RWPE1 (cell line): ENCODE measurements at regions of chr9 and their contacts with region 1.

Region 1: DNA sequence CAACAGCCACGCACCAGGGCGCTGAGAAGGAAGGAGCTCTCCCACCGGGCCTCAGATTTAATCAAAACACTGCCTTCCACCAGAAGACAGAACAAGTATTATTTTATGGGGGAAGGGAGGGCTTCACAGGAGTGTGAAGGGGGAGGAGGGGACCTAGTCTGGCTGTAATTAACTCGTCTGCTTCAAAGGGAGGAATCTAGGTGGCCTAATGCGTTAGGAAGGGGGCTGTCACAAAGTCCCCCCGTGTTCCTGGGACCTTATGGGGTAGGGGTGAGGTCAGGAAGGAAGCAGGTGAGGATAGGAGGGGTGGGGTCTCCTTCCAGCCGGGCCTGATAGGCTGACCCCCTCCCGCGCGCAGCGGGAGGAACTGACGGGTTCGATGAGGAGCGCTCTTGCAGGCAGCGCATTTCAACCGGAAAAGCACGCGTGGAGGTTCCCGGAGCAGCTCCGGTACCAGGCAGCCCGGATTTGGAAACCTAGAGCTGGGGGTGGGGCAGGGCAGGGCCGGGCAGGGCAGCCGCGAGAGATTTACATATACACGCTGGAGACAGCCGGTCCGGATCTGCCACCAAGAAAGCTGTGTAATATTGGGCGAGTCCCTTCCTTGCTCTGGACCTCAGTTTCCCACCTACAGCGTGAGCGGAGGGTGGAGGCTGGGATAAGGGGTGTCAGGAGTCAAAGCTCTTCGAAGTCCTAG is 2.0 kb downstream of the SHB start:
- DNase-seq: no peak
- H3K27ac ChIP-seq: peak overlapping the region; percentile 89
- CTCF ChIP-seq: no peak; the same call in none of the 2 replicates

Region 2: GRCh38 chr9:37827473-37828165 is 239.4 kb before region 1 on chr9:
- CTCF ChIA-PET with region 1: no interaction called
- POLR2A ChIA-PET with region 1: no interaction called
- DNase-seq: no peak
- H3K27ac ChIP-seq: no peak overlapping the region
- CTCF ChIP-seq: no peak

Region 3: DNA sequence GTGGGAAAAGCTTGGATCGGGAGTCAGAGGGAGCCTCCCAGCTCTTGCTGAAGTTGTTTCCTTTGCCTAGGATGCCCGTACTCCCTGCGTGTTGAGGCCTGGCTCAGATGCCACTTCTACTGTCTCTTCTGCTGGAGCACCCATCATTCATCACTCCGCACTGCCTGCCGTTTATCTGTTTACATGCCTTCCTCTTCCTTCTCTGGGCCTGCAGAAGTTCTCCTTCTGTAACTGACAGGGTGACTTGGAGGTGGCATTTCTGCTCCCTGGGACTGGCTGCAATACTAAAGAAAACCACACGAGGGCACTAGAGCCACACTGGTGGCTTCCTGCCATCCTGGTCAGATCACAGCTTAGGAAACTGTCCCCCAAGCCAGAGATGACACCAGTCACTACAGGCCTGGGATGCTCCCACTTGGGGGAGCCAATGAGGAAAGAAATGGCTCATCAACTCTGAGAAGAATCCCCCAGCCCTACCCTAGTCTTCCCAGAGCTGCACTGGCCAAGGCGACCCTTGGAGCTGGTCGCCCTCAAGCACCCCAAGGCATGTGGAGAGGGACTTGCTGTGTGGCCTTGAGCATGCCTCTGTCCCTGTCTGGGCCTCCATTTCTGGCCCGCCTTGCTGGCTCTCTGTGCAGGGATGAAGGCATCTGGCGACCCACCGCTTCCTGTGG is 153.4 kb before region 1 on chr9:
- CTCF ChIA-PET with region 1: interaction called, 11 read pairs
- POLR2A ChIA-PET with region 1: no interaction called
- DNase-seq: peak; percentile 74
- H3K27ac ChIP-seq: peak overlapping the region; percentile 84
- CTCF ChIP-seq: peak; percentile 96

Region 4: DNA sequence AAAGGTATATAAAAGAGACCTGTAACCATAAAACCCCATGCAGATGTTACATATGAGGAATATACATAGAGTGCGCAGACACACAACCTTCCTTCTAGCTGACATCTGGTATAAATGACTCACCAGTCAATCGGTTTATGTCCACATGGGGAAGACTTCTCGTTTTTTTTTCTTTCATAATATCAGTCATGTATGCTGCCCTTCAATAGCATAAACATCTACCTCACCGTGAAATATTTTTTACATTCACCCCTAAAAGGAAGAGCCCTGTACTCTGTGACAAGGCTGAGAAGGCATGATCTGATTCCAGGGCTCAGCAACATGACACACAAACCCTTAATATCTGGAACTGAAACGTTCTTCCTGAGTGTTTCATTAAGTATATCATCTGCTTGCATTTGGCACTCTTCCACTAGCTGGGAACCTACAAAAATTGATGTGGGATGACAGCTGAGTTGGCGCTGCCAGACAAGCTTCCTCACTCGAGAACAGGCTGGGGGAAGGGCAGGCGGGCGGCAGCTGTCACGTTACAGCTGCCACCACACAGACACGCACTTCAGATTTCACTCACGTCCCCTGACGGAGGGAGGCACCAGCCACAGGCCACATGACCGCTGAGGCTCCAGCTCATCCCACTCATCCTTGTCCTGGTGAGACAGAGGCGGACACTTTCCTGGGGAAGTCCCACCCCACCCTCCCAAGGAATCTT is 72.3 kb before region 1 on chr9:
- CTCF ChIA-PET with region 1: no interaction called
- POLR2A ChIA-PET with region 1: no interaction called
- DNase-seq: peak; percentile 70
- H3K27ac ChIP-seq: peak overlapping the region; percentile 86
- CTCF ChIP-seq: no peak

Region 5: GRCh38 chr9:38047301-38048251 is 19.5 kb before region 1 on chr9:
- CTCF ChIA-PET with region 1: no interaction called
- POLR2A ChIA-PET with region 1: interaction called, 12 read pairs
- DNase-seq: peak; percentile 86
- H3K27ac ChIP-seq: peak overlapping the region; percentile 92
- CTCF ChIP-seq: no peak

Region 6: GRCh38 chr9:38164659-38165221 is 97.7 kb after region 1 on chr9:
- CTCF ChIA-PET with region 1: no interaction called
- POLR2A ChIA-PET with region 1: no interaction called
- DNase-seq: no peak
- H3K27ac ChIP-seq: no peak overlapping the region
- CTCF ChIP-seq: no peak